MCF 10A (cell line): ENCODE measurements at regions of chr18 and their contacts with region 1.

Region 1: GRCh38 chr18:63936156-63936931 is 12.8 kb upstream of the HMSD start:
- DNase-seq: peak; percentile 90
- H3K4me3 Mint-ChIP-seq: no peak overlapping the region
- H3K27ac Mint-ChIP-seq: peak overlapping the region; percentile 40
- H3K4me1 Mint-ChIP-seq: no peaks in the 10 kb centered on the region
- H3K27me3 Mint-ChIP-seq: no peaks in the 10 kb centered on the region
- CTCF ChIP-seq: peak; percentile 75

Region 2: GRCh38 chr18:63741769-63742168 is 194.6 kb before region 1 on chr18:
- CTCF ChIA-PET with region 1: interaction called, 36 read pairs
- POLR2A ChIA-PET with region 1: interaction called, 4 read pairs
- intact Hi-C with region 1: loop called (anchors 1 kb)
- DNase-seq: peak; percentile 65
- H3K4me3 Mint-ChIP-seq: no peak overlapping the region
- H3K27ac Mint-ChIP-seq: no peak overlapping the region
- H3K4me1 Mint-ChIP-seq: peaks cover 5% of the 10 kb centered on the region
- H3K27me3 Mint-ChIP-seq: no peaks in the 10 kb centered on the region
- CTCF ChIP-seq: peak; percentile 64

Region 3: GRCh38 chr18:63859781-63860475 is 76.4 kb before region 1 on chr18:
- CTCF ChIA-PET with region 1: interaction called, 21 read pairs
- POLR2A ChIA-PET with region 1: interaction called, 4 read pairs
- intact Hi-C with region 1: loop called (anchors 5 kb)
- DNase-seq: no peak
- H3K4me3 Mint-ChIP-seq: no peak overlapping the region
- H3K27ac Mint-ChIP-seq: no peak overlapping the region
- H3K4me1 Mint-ChIP-seq: peaks cover 5% of the 10 kb centered on the region
- H3K27me3 Mint-ChIP-seq: no peaks in the 10 kb centered on the region
- CTCF ChIP-seq: no peak

Region 4: GRCh38 chr18:63897072-63897471 is 39.3 kb before region 1 on chr18:
- CTCF ChIA-PET with region 1: interaction called, 13 read pairs
- POLR2A ChIA-PET with region 1: interaction called, 3 read pairs
- intact Hi-C with region 1: no loop called
- DNase-seq: peak; percentile 43
- H3K4me3 Mint-ChIP-seq: no peak overlapping the region
- H3K27ac Mint-ChIP-seq: no peak overlapping the region
- H3K4me1 Mint-ChIP-seq: peaks cover 4% of the 10 kb centered on the region
- H3K27me3 Mint-ChIP-seq: no peaks in the 10 kb centered on the region
- CTCF ChIP-seq: no peak

Region 5: DNA sequence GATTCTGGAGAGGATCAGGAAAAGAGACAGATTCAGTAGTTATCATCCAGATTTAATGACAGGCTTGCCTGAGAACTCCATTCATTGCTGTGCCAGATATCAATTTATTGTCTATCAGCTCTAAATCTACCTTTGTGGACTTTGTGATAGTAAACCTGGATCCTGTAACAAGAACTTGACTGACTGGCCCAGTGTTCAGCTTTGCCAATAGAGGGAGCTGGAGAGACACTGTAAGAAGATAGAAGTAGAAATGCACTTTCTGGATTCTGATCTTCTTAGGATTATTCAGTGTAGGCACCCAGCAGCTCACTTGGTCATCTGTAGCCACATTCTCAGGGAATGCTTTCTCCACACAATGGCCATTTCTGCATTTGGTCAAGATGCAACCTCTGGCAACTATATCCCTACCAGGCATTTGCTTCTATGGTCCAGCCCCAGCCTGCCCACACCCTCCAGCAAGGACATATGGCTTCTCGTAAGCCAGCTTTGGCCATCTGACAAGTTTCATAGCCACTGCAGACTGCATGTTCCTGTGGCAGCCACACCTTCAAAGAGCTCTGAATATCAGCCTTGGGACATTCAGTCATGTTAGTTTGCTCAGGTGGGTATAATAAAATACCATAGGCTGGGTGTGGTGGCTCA is 27.4 kb after region 1 on chr18:
- CTCF ChIA-PET with region 1: interaction called, 26 read pairs
- POLR2A ChIA-PET with region 1: interaction called, 12 read pairs
- intact Hi-C with region 1: no loop called
- DNase-seq: peak; percentile 69
- H3K4me3 Mint-ChIP-seq: no peak overlapping the region
- H3K27ac Mint-ChIP-seq: peak overlapping the region; percentile 9
- H3K4me1 Mint-ChIP-seq: peaks cover 13% of the 10 kb centered on the region
- H3K27me3 Mint-ChIP-seq: no peaks in the 10 kb centered on the region
- CTCF ChIP-seq: peak; percentile 77

Region 6: GRCh38 chr18:64017870-64018269 is 81.5 kb after region 1 on chr18:
- CTCF ChIA-PET with region 1: no interaction called
- POLR2A ChIA-PET with region 1: no interaction called
- intact Hi-C with region 1: no loop called
- DNase-seq: peak; percentile 62
- H3K4me3 Mint-ChIP-seq: no peak overlapping the region
- H3K27ac Mint-ChIP-seq: no peak overlapping the region
- H3K4me1 Mint-ChIP-seq: no peaks in the 10 kb centered on the region
- H3K27me3 Mint-ChIP-seq: peaks cover 79% of the 10 kb centered on the region
- CTCF ChIP-seq: peak; percentile 51